GM10248 (cell line): ENCODE measurements at regions of chr1 and their contacts with region 1.

Region 1: DNA sequence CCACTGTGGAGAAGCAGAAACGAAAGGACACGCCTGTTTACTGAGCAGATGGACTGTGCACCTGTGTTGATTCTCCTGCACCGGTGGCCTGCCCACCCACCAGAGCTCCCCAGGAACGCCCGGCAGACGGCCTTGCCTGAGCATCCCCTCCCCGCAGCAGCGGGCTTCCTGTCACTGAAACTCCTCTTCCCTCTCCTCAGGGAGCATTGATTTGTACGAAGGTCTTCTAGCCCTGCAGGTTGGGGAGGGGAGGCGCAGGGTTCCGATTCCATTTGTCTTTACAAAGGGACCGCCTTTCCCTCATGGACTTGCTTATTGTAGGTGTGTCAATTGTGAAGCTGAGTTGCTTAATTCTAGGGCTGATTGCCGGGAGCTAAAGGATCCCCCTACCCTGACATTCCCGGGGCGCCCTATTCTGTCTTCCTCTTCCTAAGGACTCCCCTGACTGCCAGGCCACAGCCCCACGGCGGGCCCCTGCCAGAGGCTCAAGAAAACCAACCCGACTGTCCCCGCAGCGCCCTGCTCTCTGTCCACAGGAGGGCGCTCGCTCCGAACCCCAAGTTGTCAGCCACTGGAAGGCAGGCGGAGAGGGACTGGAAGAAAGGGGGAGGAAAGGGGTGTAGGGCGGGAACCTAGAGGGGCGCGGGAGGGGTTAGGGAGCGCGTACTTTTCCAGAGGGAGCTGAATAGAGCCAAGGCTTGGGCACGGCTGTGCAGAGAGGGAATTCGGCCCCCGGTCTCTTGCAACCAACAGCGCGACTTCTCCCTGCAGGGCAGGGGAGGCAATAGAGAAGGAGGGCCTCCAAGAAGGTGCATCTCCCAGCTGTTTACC is 2.8 kb downstream of the S100A6 start:
- DNase-seq: peak; percentile 83
- CTCF ChIP-seq: peak; percentile 87

Region 2: DNA sequence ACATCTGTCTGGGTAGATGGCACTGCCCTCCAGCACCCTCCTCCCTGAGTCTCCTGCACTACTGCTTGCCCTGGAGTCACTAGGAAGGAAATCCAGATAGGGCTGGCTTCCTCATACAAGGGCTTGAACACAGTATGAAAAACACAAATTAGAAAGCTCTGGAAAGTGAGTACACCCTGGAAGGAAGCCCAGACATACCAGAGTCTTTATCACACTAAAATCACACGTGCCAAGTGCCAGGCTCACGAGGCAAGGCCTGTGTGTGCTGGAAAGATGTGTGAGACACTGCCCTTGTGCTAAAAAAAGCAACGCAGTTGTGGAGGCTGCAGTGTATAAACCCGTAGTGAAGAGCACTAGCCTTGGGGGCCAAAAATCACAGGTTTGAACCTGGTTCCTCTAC is 44.3 kb before region 1 on chr1:
- CTCF ChIA-PET with region 1: no interaction called
- POLR2A ChIA-PET with region 1: no interaction called
- DNase-seq: no peak
- CTCF ChIP-seq: no peak

Region 3: GRCh38 chr1:153520230-153520629 is 12.8 kb before region 1 on chr1:
- CTCF ChIA-PET with region 1: interaction called, 13 read pairs
- POLR2A ChIA-PET with region 1: no interaction called
- DNase-seq: no peak
- CTCF ChIP-seq: no peak

Region 4: DNA sequence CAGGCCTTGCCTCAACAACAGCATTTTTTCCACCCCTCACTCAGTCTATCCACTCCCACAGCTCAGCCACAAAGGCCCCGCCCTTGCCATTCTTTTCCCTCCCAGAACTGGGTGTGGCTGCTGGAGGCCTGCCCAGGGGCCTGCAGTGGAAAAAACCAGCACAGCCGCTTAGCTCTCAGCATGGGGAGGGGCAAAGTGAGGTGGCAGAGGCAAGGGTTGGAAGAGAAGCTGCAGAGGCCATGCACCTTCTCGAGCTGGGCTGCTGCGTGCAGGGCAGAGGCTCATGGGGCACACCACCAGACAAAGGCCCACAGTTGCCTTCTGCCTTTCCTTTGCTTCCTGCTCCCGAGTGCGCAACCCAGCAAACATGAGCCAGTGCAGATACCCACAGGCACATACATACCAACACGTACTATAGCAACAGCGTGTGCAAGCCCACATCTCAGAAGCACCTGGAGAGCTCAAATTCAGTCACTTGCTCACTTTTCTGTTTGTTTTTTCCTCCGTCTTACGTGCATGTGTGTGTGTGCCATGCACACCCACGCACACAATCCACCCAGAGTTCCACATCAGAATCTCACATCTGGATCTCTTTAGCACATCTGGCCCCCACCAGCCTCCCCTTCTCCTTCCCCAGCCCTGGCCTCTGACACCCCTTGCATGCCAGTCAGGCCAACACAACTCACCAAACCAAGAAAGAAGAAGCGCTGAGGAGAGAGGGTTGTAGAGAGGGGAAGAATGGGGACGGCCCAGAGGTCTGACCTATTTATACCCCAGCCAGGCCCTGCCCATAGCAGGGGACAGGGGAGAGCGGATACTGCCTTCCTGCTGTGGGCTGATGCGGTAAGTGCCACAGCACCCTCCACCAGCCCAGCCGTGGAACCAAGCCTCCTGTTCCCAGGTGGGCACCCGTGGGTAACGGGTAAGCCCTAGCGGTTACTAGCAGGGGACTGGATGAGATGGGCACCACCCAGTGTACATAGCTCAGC is 12.4 kb after region 1 on chr1 and contains the start of gene S100A4:
- CTCF ChIA-PET with region 1: interaction called, 51 read pairs
- POLR2A ChIA-PET with region 1: no interaction called
- DNase-seq: peak; percentile 79
- CTCF ChIP-seq: no peak

Region 5: DNA sequence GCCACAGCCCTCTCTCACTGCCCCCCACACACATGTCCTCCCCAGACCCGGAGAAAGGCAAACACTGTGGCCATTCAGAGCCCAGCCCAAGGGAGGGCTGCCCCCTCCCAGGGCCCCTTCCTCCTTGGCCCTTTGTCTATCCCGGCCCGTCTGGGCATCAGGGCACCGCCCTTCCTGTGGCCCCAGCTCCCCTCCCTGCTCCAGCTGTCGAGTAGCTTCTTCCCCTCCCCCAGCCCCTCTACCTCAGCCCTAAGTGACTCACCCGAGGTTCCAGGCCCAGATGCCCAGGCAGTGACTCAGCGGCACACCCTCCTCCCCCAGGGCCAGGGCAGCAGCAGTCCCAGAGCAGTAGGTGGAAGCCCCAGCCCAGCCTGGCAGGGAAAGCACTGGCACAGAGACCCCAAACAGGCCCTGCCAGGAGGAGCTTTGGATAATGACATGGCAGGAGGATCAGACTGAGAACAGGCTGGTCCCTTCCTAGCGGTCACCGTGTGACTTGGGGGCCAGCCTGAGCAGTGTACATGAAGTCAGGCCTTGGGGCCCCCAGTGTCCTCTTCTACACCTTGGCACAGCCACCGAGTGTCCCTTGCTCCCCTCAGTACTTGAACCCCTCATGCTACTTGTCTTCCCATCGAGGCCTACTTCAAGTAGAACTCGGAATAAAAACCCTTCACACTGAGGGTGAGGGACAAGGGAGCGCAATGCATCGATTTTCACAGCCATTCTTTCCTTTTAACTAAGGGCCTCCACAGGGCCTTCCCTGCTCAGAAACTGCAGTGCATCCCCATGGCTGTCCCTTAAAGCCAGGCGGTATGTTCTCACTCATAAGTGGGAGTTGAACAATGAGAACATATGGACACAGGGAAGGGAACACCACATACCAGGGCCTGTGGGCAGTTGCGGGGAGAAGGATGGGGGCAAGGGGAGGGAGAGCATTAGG is 33.7 kb after region 1 on chr1:
- CTCF ChIA-PET with region 1: interaction called, 126 read pairs
- POLR2A ChIA-PET with region 1: no interaction called
- DNase-seq: peak; percentile 63
- CTCF ChIP-seq: no peak

Region 6: DNA sequence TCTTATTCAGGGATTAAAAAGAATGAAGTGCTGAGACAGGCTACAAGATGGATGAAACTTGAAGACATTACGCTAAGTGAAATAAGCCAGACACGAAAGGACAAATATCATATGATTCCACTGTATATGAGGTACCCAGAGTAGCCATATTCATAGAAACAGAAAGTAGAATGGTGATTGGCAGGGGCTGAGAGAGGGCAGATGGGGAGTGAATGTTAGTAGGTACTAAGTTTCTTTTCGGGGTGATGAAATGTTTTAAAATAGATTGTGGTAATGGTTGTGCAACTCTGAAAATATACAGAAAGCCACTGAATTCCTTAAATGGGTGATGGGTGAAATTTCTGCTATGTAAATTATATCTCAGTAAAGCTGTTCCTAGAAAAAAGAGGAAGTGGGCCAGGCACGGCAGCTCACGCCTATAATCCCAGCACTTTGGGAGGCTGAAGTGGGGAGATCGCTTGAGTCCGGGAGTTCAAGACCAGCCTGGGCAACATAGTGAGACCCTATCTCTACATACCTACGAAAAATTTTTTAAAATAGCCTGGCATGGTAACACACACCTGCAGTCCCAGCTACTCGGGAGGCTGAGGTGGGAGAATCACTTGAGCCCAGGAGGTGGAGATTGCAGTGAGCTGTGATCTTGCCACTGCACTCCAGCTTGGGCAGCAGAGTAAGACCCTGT is 258.1 kb after region 1 on chr1:
- CTCF ChIA-PET with region 1: no interaction called
- POLR2A ChIA-PET with region 1: no interaction called
- DNase-seq: peak; percentile 85
- CTCF ChIP-seq: no peak